Activated CD4-positive, alpha-beta memory T cell treated with anti-CD3 and anti-CD28 coated beads for 36 hours (primary cell): ENCODE measurements at regions of chr1 and their contacts with region 1.

Region 1: GRCh38 chr1:153238536-153238935 is 21.0 kb upstream of the LORICRIN start:
- DNase-seq: no peak
- H3K4me3 Mint-ChIP-seq: no peak overlapping the region
- H3K27ac Mint-ChIP-seq: no peak overlapping the region
- H3K4me1 Mint-ChIP-seq: no peaks in the 10 kb centered on the region
- H3K27me3 Mint-ChIP-seq: peaks cover 23% of the 10 kb centered on the region

Region 2: DNA sequence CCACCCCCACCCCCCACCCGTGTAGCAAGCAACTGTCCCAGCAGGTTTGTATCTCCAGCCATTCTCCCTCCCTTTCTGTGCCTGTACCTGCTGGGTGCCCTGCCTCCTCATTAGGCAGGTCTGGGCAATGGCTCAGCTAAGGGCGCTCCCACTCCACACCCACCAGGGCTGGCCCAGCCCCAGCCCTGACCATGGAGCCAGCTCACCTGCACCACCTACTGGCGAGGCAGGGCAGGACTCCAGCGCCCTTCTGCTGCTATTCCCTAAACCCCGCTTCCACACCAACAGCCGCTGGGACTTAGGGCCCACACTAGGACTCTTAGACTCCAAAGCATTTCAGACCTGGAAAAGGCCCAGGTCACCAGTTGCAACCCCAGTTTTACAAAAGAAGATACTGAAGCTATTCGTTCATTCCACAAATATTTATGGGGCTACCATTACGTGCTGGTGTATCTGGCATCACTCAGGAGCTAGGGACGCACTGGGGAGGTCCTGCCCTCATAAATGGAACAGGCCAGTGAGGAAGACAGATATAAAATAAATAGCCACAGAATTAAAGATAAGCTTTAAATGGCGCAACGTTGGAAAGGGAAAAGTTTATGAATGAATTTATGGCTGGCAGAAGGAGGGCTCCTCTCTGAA is 50.2 kb after region 1 on chr1:
- CTCF ChIA-PET with region 1: interaction called, 13 read pairs
- POLR2A ChIA-PET with region 1: no interaction called
- intact Hi-C with region 1: no loop called
- DNase-seq: peak; percentile 36
- H3K4me3 Mint-ChIP-seq: no peak overlapping the region
- H3K27ac Mint-ChIP-seq: no peak overlapping the region
- H3K4me1 Mint-ChIP-seq: peaks cover 17% of the 10 kb centered on the region
- H3K27me3 Mint-ChIP-seq: no peaks in the 10 kb centered on the region

Region 3: DNA sequence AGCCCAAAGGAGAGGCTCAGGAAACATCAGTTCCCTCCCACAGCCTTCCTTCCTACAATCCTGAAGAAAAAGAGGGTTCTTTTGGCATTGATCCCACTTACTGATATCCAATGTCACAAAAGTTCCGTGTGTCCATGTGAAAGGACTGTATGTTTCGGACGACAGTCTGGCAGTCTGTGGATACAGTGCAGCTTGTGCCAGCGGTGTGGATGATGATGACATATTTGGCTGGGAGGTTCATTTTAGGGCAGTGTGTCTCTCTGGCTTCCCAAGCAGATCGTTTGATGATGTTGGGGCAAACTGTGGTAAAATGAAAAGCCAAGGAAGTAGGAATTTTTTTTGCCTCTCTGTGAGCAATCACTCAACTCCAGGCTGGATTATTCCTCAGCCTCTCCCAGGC is 63.8 kb after region 1 on chr1:
- CTCF ChIA-PET with region 1: no interaction called
- POLR2A ChIA-PET with region 1: no interaction called
- intact Hi-C with region 1: no loop called
- DNase-seq: no peak
- H3K4me3 Mint-ChIP-seq: no peak overlapping the region
- H3K27ac Mint-ChIP-seq: no peak overlapping the region
- H3K4me1 Mint-ChIP-seq: no peaks in the 10 kb centered on the region
- H3K27me3 Mint-ChIP-seq: no peaks in the 10 kb centered on the region